Activated CD4-positive, alpha-beta memory T cell treated with anti-CD3 and anti-CD28 coated beads for 36 hours (primary cell): ENCODE measurements at regions of chr5 and their contacts with region 1.

Region 1: DNA sequence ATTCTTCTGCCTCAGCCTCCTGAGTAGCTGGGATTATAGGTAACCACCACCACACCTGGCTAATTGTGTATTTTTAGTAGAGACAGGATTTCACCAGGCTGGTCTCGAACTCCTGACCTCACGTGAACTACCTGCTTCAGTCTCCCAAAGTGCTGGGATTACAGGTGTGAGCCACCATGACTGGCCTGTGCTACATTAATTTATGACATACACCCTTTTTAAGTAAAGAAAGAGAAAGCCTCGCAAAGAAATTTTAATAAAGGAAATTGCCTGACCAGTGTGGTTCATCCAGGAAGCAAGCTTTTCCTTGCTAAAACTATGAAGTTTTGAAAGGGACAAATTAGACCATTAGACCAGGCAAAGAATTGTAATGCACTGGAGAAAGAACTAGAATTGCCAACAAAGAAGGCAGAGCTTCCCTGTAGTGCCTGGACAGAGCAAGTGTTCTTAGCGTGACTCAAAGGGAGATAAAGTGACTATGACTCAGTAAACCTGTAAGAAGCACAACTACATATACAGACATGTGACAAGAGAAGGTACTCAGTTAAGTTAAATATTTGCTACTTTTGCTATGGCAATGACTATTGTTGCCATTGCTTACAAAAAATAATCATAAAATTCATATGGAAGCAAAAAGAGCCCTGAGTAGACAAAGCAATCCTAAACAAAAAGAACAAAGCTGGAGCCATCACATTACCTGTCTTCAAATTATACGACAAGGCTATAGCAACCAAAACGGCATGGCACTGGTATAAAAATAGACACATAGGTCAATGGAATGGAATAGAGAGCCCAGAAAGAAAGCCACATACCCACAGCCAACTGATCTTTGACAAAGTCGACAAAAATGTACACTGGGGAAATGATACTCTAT is 54.6 kb downstream of the FYB1 start:
- DNase-seq: peak; percentile 42
- H3K4me3 Mint-ChIP-seq: peak overlapping the region; percentile 75
- H3K27ac Mint-ChIP-seq: peak overlapping the region; percentile 96
- H3K4me1 Mint-ChIP-seq: peaks cover 80% of the 10 kb centered on the region
- H3K27me3 Mint-ChIP-seq: no peaks in the 10 kb centered on the region

Region 2: DNA sequence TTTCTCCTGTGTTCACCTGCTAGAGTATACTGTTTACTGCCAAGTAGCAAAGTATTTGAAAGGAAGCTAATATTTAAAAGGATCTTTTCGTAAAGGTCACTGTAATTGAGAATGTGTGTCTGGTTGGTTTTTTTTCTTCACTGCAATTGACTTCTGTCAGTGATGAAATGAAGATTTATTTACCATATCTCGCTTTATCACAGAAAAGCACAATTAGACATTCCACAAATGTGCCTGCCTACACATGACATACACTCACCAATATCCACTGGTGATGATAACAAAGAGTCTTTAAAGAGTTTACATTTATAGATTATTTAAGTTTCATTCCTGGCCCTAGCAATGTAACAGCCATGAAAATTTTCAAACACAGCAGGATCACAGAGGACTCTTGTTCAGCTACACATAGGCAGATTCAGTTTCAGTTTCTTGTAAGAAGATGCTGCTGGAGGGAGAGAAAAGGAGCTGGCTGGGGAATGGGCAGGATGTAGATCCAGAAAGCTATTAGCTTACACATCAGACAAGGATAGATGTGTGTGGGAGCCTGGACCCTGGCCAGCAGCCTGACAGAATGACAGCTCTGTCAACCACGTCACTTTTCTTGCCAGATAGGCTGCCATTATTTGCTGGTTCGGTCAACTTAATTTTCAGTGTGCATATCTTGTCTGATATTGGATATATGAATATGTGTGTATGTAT is 1429.0 kb before region 1 on chr5:
- CTCF ChIA-PET with region 1: no interaction called
- POLR2A ChIA-PET with region 1: no interaction called
- intact Hi-C with region 1: no loop called
- DNase-seq: no peak
- H3K4me3 Mint-ChIP-seq: no peak overlapping the region
- H3K27ac Mint-ChIP-seq: no peak overlapping the region
- H3K4me1 Mint-ChIP-seq: peaks cover 24% of the 10 kb centered on the region
- H3K27me3 Mint-ChIP-seq: no peaks in the 10 kb centered on the region

Region 3: GRCh38 chr5:39148983-39149534 is 15.7 kb before region 1 on chr5:
- CTCF ChIA-PET with region 1: interaction called, 7 read pairs
- POLR2A ChIA-PET with region 1: interaction called, 10 read pairs
- intact Hi-C with region 1: loop called (anchors 1 kb)
- DNase-seq: no peak
- H3K4me3 Mint-ChIP-seq: no peak overlapping the region
- H3K27ac Mint-ChIP-seq: peak overlapping the region; percentile 90
- H3K4me1 Mint-ChIP-seq: peaks cover 61% of the 10 kb centered on the region
- H3K27me3 Mint-ChIP-seq: no peaks in the 10 kb centered on the region

Region 4: DNA sequence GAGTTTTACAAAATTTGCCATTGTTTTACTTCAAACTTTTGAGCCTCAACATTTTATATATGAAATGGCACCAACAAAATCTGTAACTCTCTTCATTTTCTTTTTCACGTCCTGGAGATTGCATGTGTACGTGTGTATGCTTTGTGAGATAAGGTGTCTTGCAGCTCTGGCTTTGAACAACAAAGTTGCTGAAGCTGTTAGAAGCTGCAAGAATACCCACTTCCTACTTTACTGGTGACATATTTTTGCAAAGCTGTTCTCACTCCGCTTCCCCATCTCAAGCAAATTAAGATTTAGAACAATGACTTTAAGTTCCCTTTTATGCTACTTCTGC is 12.8 kb after region 1 on chr5:
- CTCF ChIA-PET with region 1: interaction called, 34 read pairs
- POLR2A ChIA-PET with region 1: interaction called, 53 read pairs
- intact Hi-C with region 1: loop called (anchors 1 kb)
- DNase-seq: no peak
- H3K4me3 Mint-ChIP-seq: peak overlapping the region; percentile 63
- H3K27ac Mint-ChIP-seq: peak overlapping the region; percentile 88
- H3K4me1 Mint-ChIP-seq: peaks cover 97% of the 10 kb centered on the region
- H3K27me3 Mint-ChIP-seq: no peaks in the 10 kb centered on the region

Region 5: DNA sequence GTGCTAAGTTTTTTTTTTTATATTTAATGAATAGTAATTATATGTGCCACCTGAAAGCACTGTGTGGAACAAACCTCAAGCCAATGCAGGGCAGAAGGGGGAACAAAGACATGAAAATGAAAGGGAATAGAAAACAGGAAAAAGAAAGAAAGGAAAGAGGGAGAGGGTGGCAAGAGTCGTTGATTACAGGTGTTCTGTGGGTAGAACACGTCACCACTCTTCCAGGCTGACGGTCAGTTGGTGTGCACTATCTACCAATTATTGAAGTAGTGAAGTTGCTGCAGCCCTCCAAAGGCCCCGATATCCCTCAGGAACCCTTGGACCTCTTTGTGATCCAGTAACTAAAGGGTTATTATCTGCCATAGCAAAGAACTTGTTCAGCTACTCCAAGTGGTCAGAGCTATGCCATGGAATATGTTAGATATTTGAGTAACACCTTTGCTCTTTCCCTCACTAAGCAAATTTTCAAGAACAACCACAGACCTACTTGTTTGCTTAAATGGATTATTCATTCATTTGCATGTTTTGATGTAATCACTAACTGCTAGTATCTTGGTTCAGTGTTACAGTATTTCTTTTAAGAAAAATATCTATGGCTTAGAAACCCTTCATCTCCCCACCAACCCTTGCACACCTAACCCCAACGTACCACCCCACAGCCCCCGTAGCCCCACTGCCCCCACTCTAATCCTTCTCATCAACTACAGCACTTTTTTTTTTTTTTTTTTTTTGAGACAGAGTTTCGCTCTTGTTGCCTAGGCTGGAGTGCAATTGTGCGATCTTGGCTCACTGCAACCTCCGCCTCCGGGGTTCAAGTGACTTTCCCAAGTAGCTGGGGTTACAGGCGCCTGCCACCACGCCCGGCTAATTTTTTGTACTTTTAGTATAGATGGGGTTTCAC is 23.3 kb after region 1 on chr5:
- CTCF ChIA-PET with region 1: interaction called, 4 read pairs
- POLR2A ChIA-PET with region 1: interaction called, 18 read pairs
- intact Hi-C with region 1: no loop called
- DNase-seq: no peak
- H3K4me3 Mint-ChIP-seq: peak overlapping the region; percentile 69
- H3K27ac Mint-ChIP-seq: peak overlapping the region; percentile 92
- H3K4me1 Mint-ChIP-seq: peaks cover 79% of the 10 kb centered on the region
- H3K27me3 Mint-ChIP-seq: no peaks in the 10 kb centered on the region

Region 6: DNA sequence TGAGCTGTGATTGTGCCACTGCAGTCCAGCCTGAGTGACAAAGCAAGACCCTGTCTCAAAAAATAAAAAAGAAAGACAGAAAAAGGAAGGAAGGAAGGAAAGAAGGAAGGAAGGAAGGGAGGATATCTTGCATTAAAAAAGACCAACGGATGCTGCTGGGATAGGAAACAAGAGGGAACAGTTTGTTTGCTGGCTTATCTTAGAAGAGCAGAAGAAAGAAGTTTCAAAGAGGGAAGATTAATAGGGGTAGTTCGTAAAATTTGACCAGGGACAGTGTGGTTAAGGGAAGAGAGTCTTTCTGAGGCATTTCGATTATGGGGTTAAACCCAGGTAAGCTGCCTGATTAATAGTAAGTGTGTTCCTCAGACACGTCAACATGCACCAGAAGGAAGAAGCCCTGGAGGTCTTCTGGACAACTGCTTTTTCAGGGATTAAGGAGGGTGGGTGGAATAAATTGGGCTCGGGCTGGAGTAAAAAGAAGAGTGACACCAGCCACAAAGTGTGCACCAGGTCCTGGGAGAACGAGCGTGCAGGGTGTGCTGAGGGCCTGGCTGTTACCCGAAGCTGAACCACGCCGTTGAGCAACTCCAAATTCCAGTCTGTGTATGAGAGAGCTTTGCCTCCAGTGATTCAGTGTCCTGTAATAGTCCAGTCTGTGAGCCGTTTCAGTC is 29.8 kb after region 1 on chr5:
- CTCF ChIA-PET with region 1: interaction called, 11 read pairs
- POLR2A ChIA-PET with region 1: interaction called, 12 read pairs
- intact Hi-C with region 1: no loop called
- DNase-seq: no peak
- H3K4me3 Mint-ChIP-seq: peak overlapping the region; percentile 75
- H3K27ac Mint-ChIP-seq: peak overlapping the region; percentile 91
- H3K4me1 Mint-ChIP-seq: peaks cover 66% of the 10 kb centered on the region
- H3K27me3 Mint-ChIP-seq: no peaks in the 10 kb centered on the region